Ascending aorta (tissue), 2 donors: ENCODE measurements at regions of chr3 and their contacts with region 1.

Region 1: GRCh38 chr3:160413613-160414248 is 14.3 kb downstream of the SMC4 start:
- DNase-seq: peak in 1 of 2 donors; percentile 68
- H3K4me3 ChIP-seq: no peak overlapping the region
- H3K27ac ChIP-seq: no peak overlapping the region
- H3K4me1 ChIP-seq: no peaks in the 10 kb centered on the region
- H3K27me3 ChIP-seq: no peaks in the 10 kb centered on the region
- CTCF ChIP-seq: peak; percentile 52 to 86 (median 83)

Region 2: DNA sequence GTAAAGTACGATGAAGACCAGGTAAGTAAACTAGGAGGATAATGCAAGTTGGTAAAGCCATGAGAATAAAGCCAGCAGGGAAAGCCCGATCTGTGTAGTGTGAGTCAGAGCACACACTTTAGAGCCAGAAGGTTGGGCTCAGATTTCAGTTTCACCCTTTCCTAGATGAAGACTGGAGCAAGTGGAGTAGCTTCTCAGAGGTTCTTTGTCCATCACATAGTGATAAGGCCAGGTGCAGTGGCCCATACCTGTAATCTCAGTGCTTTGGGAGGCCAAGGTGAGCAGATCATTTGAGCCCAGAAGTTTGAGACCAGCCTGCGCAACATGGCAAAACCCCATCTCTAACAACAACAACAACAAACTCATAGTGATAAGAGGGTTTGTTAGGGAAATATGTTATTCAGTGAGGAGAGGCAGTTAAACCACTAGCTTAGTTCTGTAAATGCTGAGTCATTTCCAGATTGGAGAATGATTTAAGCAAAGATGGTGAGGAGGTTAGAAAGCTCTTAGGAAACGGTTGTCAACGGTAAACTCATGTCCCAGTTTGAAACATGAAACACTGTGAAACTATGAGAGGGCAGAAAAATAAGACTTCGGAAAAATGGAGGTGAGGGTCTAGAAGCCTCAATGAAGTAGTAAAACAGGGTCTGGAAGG is 386.1 kb before region 1 on chr3:
- intact Hi-C with region 1: loop called (anchors 5 kb)
- DNase-seq: no peak
- H3K4me3 ChIP-seq: no peak overlapping the region
- H3K27ac ChIP-seq: no peak overlapping the region
- H3K4me1 ChIP-seq: no peaks in the 10 kb centered on the region
- H3K27me3 ChIP-seq: no peaks in the 10 kb centered on the region
- CTCF ChIP-seq: no peak

Region 3: DNA sequence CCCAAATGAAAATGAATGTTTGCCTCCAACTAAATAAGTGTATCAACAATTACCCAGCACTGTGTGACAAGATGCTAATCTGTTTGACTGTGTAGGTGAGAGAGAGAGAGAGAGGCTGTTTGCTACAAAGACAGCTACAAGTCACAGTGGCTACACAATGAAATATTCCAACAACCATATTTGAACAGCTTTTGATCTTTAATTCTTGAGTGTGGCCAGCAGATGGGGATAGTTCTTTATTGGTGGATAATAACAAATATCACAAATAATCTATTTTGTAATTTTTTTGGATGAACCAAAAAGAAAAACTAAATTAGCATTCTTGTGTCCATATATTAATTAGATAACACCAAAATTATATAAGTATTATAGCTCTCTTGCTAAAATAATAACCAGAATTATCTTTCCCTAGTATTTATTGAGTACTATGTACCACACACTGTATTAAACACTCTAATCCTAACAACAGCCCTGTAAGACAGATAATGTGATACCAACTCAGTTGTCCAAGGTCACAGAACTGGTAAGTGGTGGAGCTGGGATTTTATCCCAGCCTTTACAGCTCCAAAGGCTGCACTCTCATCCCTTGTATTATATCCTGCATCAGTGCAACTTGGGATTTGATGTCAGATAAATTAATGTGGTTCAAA is 250.4 kb before region 1 on chr3:
- intact Hi-C with region 1: loop called (anchors 2 kb)
- DNase-seq: no peak
- H3K4me3 ChIP-seq: no peak overlapping the region
- H3K27ac ChIP-seq: no peak overlapping the region
- H3K4me1 ChIP-seq: no peaks in the 10 kb centered on the region
- H3K27me3 ChIP-seq: no peaks in the 10 kb centered on the region
- CTCF ChIP-seq: peak in 2 of 3 experiments; percentile 7 to 43

Region 4: DNA sequence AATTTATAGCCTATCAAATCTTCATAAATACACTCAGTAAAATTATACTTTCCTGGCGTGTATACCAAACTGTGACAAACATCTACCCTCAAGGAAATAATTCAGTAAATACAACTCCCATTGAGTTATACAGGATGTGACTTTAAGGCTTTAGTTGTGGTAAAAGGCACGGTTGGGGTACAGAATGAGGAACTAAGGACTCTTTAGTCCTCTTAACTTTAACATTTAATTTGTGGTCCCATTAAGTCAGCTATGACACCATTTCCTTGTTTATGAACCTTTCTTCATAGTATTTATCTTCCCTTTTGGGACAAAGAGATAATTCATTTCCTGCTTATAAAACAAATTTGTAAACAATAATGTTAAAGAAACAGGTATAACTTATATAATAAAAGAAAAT is 44.9 kb before region 1 on chr3:
- intact Hi-C with region 1: no loop called
- DNase-seq: no peak
- H3K4me3 ChIP-seq: no peak overlapping the region
- H3K27ac ChIP-seq: no peak overlapping the region
- H3K4me1 ChIP-seq: no peaks in the 10 kb centered on the region
- H3K27me3 ChIP-seq: no peaks in the 10 kb centered on the region
- CTCF ChIP-seq: no peak